ENCODE measurements at regions of chr4 and their contacts with region 1.

Region 1: DNA sequence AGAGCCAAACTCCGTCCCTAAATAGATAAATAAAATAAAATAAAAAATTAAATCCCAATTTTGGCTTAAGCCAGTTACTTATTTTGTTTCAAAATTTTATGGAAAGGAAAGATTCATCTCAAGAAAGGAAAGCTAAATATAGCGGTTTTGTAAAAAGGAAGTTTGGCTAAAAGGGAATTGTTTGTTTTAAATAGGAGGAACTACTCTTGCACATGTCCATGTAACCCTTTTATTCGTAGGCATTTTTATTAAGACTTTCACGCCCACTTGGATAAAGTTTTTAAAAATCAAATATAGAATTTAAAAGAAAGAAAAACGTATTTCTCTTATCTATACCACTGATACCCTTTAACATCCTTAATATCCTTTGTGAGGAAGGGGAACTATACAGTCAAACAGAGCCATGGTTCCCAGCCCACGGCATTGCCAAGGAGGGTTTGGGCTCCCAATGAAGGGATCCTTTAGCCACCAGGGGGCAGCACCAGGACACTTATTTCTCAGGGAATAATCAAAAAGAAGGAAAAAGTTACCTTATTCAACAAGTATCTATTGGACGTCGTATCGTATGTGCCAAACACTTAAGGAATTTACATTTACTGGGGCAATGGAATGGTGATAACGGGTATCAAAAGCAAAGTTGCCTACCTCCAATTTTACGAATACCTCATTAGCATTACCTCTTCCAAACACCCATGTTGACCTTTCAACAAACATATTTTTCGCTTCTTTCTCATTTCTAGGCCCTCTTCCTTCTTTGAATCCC is 27.7 kb downstream of the CDKN2AIP start:
- DNase-seq: peak; percentile 84
- H3K4me3 Mint-ChIP-seq: no peak overlapping the region
- H3K27ac Mint-ChIP-seq: no peak overlapping the region
- H3K4me1 Mint-ChIP-seq: peaks cover 2% of the 10 kb centered on the region
- H3K27me3 Mint-ChIP-seq: no peaks in the 10 kb centered on the region

Region 2: GRCh38 chr4:183602557-183603027 is 130.5 kb after region 1 on chr4:
- CTCF ChIA-PET with region 1: interaction called, 7 read pairs
- POLR2A ChIA-PET with region 1: no interaction called
- intact Hi-C with region 1: loop called (anchors 1 kb)
- DNase-seq: no peak
- H3K4me3 Mint-ChIP-seq: no peak overlapping the region
- H3K27ac Mint-ChIP-seq: no peak overlapping the region
- H3K4me1 Mint-ChIP-seq: no peaks in the 10 kb centered on the region
- H3K27me3 Mint-ChIP-seq: peaks cover 3% of the 10 kb centered on the region

Region 3: GRCh38 chr4:183659029-183659871 is 187.1 kb after region 1 on chr4 and contains the starts of genes RWDD4 and TRAPPC11:
- CTCF ChIA-PET with region 1: interaction called, 5 read pairs
- POLR2A ChIA-PET with region 1: no interaction called
- intact Hi-C with region 1: loop called (anchors 1 kb)
- DNase-seq: peak; percentile 98
- H3K4me3 Mint-ChIP-seq: peak within 1 kb of the TSS; percentile 85
- H3K27ac Mint-ChIP-seq: peak within 1 kb of the TSS; percentile 80
- H3K4me1 Mint-ChIP-seq: peaks cover 35% of the 10 kb centered on the region
- H3K27me3 Mint-ChIP-seq: no peaks in the 10 kb centered on the region
- total RNA-seq, gene RWDD4: 19.4 to 19.8 TPM
- total RNA-seq, gene TRAPPC11: 29.7 to 30.2 TPM

Region 4: DNA sequence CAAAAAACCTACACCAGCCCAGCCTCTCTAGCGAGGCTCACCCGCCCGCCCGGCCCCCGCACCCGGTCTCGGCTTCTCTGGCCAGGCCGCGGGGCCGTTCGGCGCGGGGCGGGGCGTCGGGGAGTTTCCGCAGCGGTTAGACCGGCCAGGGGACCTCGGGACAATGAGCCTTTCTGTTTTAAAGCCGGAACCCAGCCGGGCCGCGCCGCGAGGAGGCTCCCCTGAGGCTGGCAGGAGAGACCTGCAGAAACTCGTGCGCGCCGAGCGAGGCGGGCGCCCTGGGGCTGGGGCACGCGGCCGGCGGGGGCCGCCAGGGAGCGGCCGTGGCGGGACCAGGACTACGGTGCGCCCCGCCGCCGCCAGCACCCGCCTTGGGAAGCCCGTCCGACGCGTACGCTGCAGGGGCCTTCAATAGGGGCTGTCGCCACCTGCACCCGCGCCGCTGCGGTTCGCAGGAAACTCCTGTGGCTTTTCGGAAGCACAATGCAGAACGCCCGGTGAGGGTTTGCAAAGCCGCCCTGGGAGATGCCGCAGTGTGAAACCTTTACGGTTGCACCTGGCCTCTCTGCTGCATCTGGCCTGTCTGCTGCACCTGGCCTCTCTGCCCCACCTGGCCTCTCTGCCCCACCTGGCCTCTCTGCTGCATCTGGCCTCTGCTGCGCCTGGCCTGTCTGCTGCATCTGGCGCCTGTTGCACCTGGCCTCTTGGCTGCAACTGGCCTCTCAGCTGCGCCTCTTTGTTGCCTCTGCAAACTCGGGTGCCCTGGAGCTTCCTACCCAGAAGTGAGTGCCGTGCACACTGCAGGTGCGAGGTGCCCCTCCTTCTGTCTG is 250.8 kb after region 1 on chr4:
- CTCF ChIA-PET with region 1: no interaction called
- POLR2A ChIA-PET with region 1: no interaction called
- intact Hi-C with region 1: loop called (anchors 1 kb)
- DNase-seq: peak; percentile 63
- H3K4me3 Mint-ChIP-seq: peak overlapping the region; percentile 69
- H3K27ac Mint-ChIP-seq: no peak overlapping the region
- H3K4me1 Mint-ChIP-seq: peaks cover 11% of the 10 kb centered on the region
- H3K27me3 Mint-ChIP-seq: peaks cover 7% of the 10 kb centered on the region

Region 5: DNA sequence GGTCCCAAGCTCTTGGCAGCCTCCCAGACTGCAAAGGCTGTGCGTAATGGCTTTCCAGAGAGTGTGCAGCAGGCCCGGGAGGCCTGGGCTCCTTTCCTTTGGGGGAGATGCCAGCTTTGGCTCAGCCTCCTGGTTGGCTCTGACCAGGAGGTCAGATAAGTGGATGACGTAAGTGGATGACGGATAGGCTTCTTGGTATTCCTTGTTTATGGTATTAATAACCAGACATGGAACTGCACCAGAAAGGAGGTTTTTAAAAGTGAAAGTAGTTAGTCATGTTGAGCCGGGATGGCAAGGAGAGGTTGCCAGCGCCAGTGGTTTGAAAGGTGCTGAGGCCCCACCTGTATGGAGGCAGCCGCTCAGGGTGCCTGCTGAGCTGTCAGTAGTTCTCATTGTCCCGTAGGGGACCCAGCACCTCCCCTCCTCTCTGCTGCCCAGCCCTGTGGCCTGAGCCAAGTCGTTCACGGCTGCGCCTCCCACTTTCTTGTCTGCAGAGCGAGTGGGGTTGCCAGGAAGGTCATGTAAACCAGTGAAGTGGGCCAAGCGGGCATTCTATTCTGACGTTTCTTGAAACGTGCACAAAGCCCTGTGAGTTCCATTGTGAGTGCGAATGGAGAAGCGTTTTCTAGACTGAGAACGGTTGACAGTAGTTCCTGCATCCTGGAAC is 404.3 kb after region 1 on chr4:
- CTCF ChIA-PET with region 1: no interaction called
- POLR2A ChIA-PET with region 1: no interaction called
- intact Hi-C with region 1: no loop called
- DNase-seq: no peak
- H3K4me3 Mint-ChIP-seq: no peak overlapping the region
- H3K27ac Mint-ChIP-seq: no peak overlapping the region
- H3K4me1 Mint-ChIP-seq: no peaks in the 10 kb centered on the region
- H3K27me3 Mint-ChIP-seq: peaks cover 2% of the 10 kb centered on the region

Region 6: DNA sequence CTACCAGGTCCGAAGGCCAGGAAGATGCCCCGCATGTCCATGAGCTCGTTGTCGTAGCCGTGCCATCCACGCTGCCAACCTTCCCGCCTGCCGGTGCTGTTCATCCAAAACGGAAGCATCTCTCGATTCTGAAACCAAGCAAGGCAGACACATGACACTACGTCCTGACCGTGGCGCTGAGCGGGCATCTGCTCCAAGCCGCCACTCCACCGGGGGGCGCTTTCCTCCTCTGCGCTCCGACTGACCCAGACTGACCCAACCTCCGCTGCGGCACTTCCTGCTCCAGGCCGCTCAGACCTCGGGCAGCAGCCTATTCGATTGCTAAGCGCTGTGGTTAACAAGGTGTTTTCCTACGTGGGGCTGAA is 625.1 kb after region 1 on chr4:
- CTCF ChIA-PET with region 1: no interaction called
- POLR2A ChIA-PET with region 1: no interaction called
- intact Hi-C with region 1: loop called (anchors 5 kb)
- DNase-seq: peak; percentile 59
- H3K4me3 Mint-ChIP-seq: peak overlapping the region; percentile 30
- H3K27ac Mint-ChIP-seq: no peak overlapping the region
- H3K4me1 Mint-ChIP-seq: peaks cover 6% of the 10 kb centered on the region
- H3K27me3 Mint-ChIP-seq: peaks cover 14% of the 10 kb centered on the region

Region 7: GRCh38 chr4:184168406-184169019 is 696.4 kb after region 1 on chr4:
- CTCF ChIA-PET with region 1: no interaction called
- POLR2A ChIA-PET with region 1: no interaction called
- intact Hi-C with region 1: loop called (anchors 10 kb)
- DNase-seq: peak; percentile 70
- H3K4me3 Mint-ChIP-seq: no peak overlapping the region
- H3K27ac Mint-ChIP-seq: no peak overlapping the region
- H3K4me1 Mint-ChIP-seq: peaks cover 2% of the 10 kb centered on the region
- H3K27me3 Mint-ChIP-seq: peaks cover 44% of the 10 kb centered on the region